ENCODE measurements at regions of chr17 and their contacts with region 1.

Region 1: DNA sequence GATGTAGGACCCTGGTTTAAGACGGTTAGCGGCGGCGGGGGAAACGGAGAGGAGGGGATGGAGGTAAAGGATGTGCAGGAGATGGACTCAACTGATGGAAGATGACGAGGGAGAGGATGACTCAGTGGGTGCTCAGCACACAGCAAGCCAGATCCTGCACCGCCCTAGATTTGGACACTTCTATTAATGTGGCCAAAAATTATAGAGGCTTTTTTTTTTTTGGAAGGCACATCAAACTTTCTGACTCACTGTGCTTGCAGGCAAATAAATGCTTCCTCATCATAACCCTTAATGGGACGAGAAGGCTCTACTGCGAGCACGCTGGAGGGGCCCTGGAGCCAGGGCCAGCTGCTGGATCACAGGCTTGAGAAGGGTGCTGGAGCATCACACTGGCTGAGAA is 36.0 kb downstream of the RTN4RL1 start:
- DNase-seq: peak; percentile 55
- ATAC-seq: peak; percentile 84 to 88
- H3K4me3 ChIP-seq: no peak overlapping the region
- H3K27ac ChIP-seq: peak overlapping the region; percentile 64 to 83
- H3K4me1 ChIP-seq: peaks cover 21% of the 10 kb centered on the region
- CTCF ChIP-seq: no peak
- EP300 ChIP-seq: no peak
- POLR2A ChIP-seq: no peak
- RAD21 ChIP-seq: no peak

Region 2: DNA sequence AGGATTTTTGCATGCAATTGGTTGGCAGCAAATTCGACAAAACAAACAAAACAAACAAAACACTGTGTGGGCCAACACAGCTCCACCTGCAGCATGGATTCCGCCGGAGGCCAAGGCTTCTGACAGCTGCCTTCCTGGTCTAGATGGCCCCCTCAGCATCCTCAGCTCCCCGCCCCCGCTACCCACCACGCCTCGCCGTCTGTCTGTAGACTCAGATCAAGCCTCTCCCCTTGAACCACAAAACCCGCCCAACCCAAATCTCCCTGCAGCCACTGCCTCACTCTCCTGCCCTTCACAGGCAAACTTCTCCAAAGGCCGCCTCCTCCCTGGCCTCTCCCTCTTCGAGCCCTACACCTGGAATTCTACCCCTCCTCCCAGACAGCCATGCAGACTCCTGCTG is 21.9 kb before region 1 on chr17:
- CTCF ChIA-PET with region 1: no interaction called
- POLR2A ChIA-PET with region 1: no interaction called
- DNase-seq: no peak
- ATAC-seq: no peak
- H3K4me3 ChIP-seq: no peak overlapping the region
- H3K27ac ChIP-seq: no peak overlapping the region
- H3K4me1 ChIP-seq: no peaks in the 10 kb centered on the region
- CTCF ChIP-seq: no peak
- EP300 ChIP-seq: no peak
- POLR2A ChIP-seq: no peak
- RAD21 ChIP-seq: no peak

Region 3: GRCh38 chr17:1977583-1978395 is 11.3 kb before region 1 on chr17:
- CTCF ChIA-PET with region 1: interaction called, 13 read pairs
- POLR2A ChIA-PET with region 1: no interaction called
- DNase-seq: no peak
- ATAC-seq: no peak
- H3K4me3 ChIP-seq: no peak overlapping the region
- H3K27ac ChIP-seq: no peak overlapping the region
- H3K4me1 ChIP-seq: peaks cover 10% of the 10 kb centered on the region; the same call in 2 of the 3 replicates
- CTCF ChIP-seq: no peak
- EP300 ChIP-seq: no peak
- POLR2A ChIP-seq: no peak
- RAD21 ChIP-seq: no peak

Measured in A549 (cell line).